ENCODE measurements at regions of chr21 and their contacts with region 1.

Region 1: GRCh38 chr21:33374450-33375096 is 28.6 kb upstream of the IFNGR2 start:
- DNase-seq: peak; percentile 55
- H3K4me3 ChIP-seq: no peak overlapping the region
- H3K27ac ChIP-seq: no peak overlapping the region
- H3K4me1 ChIP-seq: peaks cover 27% of the 10 kb centered on the region
- H3K27me3 ChIP-seq: no peaks in the 10 kb centered on the region
- CTCF ChIP-seq: peak; percentile 59 to 72

Region 2: GRCh38 chr21:33339918-33340317 is 34.7 kb before region 1 on chr21:
- CTCF ChIA-PET with region 1: no interaction called
- dilution Hi-C with region 1: no loop called
- in situ Hi-C with region 1: no loop called
- intact Hi-C with region 1: no loop called
- DNase-seq: no peak
- H3K4me3 ChIP-seq: no peak overlapping the region
- H3K27ac ChIP-seq: no peak overlapping the region
- H3K4me1 ChIP-seq: peaks cover 2% of the 10 kb centered on the region
- H3K27me3 ChIP-seq: no peaks in the 10 kb centered on the region
- CTCF ChIP-seq: no peak

Region 3: DNA sequence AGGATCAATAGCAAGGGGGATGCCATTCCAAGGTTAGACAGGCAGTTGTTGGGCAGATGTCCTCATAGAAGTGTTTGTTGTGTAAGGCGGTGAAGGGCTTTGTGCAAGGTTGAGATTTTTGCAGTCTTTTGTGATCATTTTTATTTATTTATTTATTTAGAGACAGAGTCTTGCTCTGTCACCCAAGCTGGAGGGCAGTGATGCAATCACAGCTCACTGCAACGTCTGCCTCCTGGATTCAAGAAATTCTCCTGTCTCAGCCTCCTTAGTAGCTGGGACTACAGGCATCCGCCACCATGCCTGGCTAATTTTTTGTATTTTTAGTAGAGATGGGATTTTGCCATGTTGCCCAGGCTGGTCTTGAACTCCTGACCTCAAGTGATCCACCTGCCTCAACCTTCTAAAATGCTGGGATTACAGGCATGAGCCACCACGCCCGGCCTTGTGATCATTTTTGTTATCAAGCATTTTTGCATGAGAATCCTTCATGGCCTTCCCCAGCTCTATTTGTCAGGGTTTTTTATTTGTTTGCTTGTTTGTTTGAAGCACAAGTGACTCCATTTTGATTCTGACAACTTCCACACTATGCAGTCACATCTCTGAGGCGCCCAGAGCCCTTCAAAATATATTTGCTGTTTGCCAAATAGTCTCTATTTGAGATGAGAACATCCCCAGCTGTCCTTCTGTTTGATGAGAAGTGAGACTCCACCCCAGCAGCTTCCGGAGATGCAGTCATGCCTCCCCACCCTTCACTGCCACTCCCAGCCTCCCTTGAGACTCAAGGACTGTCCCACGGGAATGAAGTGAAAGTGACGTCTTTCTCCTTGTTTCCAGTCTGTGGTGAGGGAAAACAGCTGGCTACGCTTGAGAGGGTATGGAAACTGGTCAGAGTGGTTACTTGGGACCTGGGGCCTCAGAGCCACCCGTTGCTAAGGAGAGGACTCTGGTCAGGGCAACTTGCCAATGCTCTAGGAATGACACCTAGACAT is 67.2 kb after region 1 on chr21:
- CTCF ChIA-PET with region 1: no interaction called
- dilution Hi-C with region 1: no loop called
- in situ Hi-C with region 1: no loop called
- intact Hi-C with region 1: loop called (anchors 1 kb)
- DNase-seq: peak; percentile 96
- H3K4me3 ChIP-seq: no peak overlapping the region
- H3K27ac ChIP-seq: peak overlapping the region; percentile 70
- H3K4me1 ChIP-seq: peaks cover 19% of the 10 kb centered on the region
- H3K27me3 ChIP-seq: no peaks in the 10 kb centered on the region
- CTCF ChIP-seq: no peak